ENCODE measurements at regions of chr14 and their contacts with region 1.

Region 1: DNA sequence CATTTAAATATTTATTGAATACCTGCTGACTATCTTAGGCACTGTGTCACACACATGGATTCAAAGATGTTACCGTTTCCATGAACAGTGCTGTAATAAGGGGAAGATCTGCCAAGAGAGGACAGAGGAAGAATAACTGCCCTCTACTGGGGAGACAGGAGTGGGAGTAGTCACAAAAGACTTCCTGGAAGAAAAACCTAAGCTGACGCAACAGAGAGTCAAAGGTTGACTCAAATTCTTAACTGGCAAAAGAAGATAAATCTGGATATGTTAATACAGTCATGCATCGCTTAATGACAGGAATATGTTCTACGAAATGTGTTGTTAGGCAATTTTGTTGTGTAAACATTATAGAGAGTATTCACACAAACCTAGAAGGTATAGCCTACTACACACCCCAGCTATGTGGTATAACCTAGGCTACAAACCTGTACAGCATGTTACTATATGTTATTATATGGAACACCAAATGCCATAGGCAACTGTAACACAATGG is 51.5 kb downstream of the DCAF5 start:
- H3K4me3 Mint-ChIP-seq: no peak overlapping the region
- H3K27ac Mint-ChIP-seq: no peak overlapping the region
- H3K4me1 Mint-ChIP-seq: no peaks in the 10 kb centered on the region
- H3K27me3 Mint-ChIP-seq: no peaks in the 10 kb centered on the region

Region 2: DNA sequence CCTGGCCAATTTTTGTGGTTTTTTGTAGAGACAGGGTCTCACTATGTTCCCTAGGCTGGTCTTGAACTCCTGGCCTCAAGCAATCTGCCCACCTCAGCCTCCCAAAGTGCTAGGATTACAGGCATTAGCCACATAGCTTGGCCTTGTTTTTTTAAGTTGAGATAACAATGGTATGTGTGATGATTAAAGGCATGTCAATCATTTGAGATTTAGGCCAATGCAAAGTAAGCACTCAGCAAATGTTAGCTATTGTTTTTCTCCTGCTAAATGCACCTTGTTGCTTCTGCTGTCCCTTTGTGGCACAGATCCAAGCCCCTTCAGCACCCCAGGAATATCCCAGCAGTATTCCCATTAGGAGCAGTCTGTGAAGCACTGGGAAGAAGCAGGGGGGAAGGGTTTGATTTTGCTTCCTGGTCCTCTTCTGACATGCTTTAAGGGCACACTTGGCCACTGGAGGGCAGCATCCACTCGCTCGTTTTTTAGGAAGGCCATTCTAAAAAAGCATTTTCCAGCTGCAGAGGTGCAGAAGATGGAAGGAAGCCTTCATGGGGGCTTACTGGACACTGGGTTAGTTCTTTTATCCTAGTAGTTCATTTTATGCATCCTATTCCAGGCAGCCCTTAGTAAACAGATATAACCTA is 238.3 kb before region 1 on chr14:
- intact Hi-C with region 1: loop called (anchors 5 kb)
- H3K4me3 Mint-ChIP-seq: no peak overlapping the region
- H3K27ac Mint-ChIP-seq: no peak overlapping the region
- H3K4me1 Mint-ChIP-seq: peaks cover 11% of the 10 kb centered on the region
- H3K27me3 Mint-ChIP-seq: no peaks in the 10 kb centered on the region

Region 3: GRCh38 chr14:69133206-69134125 is 32.1 kb after region 1 on chr14:
- intact Hi-C with region 1: no loop called
- H3K4me3 Mint-ChIP-seq: no peak overlapping the region
- H3K27ac Mint-ChIP-seq: no peak overlapping the region
- H3K4me1 Mint-ChIP-seq: peaks cover 48% of the 10 kb centered on the region
- H3K27me3 Mint-ChIP-seq: no peaks in the 10 kb centered on the region